Aorta (tissue), 5 donors: ENCODE measurements at regions of chr2 and their contacts with region 1.

Region 1: GRCh38 chr2:33134086-33134771 is 187.5 kb downstream of the LTBP1 start:
- DNase-seq: peak; percentile 77 to 84
- ATAC-seq: peak; percentile 78
- H3K4me3 ChIP-seq: peak overlapping the region; percentile 91 to 97
- H3K27ac ChIP-seq: peak overlapping the region; percentile 98 to 100
- H3K4me1 ChIP-seq: peaks cover 18 to 19% of the 10 kb centered on the region in 2 donors
- H3K27me3 ChIP-seq: no peaks in the 10 kb centered on the region

Region 2: DNA sequence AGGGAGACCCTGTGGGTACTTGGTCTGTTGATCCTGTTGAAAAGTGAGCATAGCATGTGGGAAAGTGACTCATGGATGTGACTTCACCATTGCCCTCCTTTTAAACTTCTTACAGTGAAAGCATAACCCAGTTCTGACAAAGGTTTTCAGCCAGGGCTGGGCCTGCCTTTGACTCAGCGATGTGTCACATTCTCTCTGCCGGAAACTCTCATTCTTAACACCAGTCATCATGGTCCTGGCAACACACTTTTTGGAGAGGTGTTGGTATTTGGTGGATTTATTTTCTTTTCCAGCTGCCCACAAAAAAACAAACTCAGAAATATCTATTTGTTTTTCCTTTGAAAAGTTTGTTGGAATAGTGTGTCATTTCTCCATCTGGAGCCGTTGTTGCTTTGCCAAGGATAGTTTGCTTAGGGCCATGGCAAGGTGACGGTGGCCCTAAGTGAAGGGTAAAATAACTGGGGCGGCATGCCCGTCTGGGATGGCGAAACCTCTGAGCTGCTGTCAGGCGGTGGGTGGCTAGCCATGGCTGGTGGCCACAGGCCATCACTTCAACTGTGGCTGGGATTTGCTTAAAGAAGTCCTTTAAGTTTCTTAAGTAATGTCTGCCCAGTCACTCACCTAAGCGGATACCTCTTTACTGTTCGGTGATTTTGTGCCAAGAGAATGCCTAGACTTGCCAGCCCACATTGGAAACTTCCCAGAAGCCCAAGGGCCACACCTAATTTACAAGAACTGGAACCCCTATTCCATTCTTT is 64.2 kb before region 1 on chr2:
- intact Hi-C with region 1: loop called (anchors 5 kb)
- DNase-seq: peak; percentile 85
- ATAC-seq: peak; percentile 93
- H3K4me3 ChIP-seq: no peak overlapping the region
- H3K27ac ChIP-seq: peak overlapping the region; percentile 72 to 98
- H3K4me1 ChIP-seq: peaks cover 6 to 10% of the 10 kb centered on the region in 2 donors
- H3K27me3 ChIP-seq: no peaks in the 10 kb centered on the region

Region 3: GRCh38 chr2:33108483-33109443 is 25.5 kb before region 1 on chr2:
- intact Hi-C with region 1: loop called in 1 of 2 experiments (anchors 2 kb)
- DNase-seq: no peak
- ATAC-seq: peak; percentile 49
- H3K4me3 ChIP-seq: peak overlapping the region in 1 of 2 donors; percentile 20
- H3K27ac ChIP-seq: peak overlapping the region; percentile 37 to 85
- H3K4me1 ChIP-seq: peaks cover 10 to 20% of the 10 kb centered on the region in 2 donors
- H3K27me3 ChIP-seq: no peaks in the 10 kb centered on the region

Region 4: GRCh38 chr2:33158482-33159003 is 24.3 kb after region 1 on chr2:
- intact Hi-C with region 1: loop called in 1 of 2 experiments (anchors 2 kb)
- DNase-seq: no peak
- ATAC-seq: peak; percentile 58
- H3K4me3 ChIP-seq: no peak overlapping the region
- H3K27ac ChIP-seq: peak overlapping the region; percentile 87 to 99
- H3K4me1 ChIP-seq: peaks cover 12 to 13% of the 10 kb centered on the region in 2 donors
- H3K27me3 ChIP-seq: no peaks in the 10 kb centered on the region

Region 5: GRCh38 chr2:33210626-33211025 is 76.4 kb after region 1 on chr2:
- intact Hi-C with region 1: loop called (anchors 2 to 5 kb)
- DNase-seq: peak; percentile 82 to 84
- ATAC-seq: peak; percentile 78
- H3K4me3 ChIP-seq: no peak overlapping the region
- H3K27ac ChIP-seq: peak overlapping the region in 1 of 2 donors; percentile 37
- H3K4me1 ChIP-seq: peaks cover 12 to 21% of the 10 kb centered on the region in 2 donors
- H3K27me3 ChIP-seq: no peaks in the 10 kb centered on the region

Region 6: GRCh38 chr2:33275689-33276444 is 141.6 kb after region 1 on chr2:
- intact Hi-C with region 1: loop called in 1 of 2 experiments (anchors 5 kb)
- DNase-seq: peak; percentile 86 to 88
- ATAC-seq: peak; percentile 77
- H3K4me3 ChIP-seq: no peak overlapping the region
- H3K27ac ChIP-seq: peak overlapping the region; percentile 58 to 85
- H3K4me1 ChIP-seq: peaks cover 2 to 3% of the 10 kb centered on the region in 2 donors
- H3K27me3 ChIP-seq: no peaks in the 10 kb centered on the region

Region 7: DNA sequence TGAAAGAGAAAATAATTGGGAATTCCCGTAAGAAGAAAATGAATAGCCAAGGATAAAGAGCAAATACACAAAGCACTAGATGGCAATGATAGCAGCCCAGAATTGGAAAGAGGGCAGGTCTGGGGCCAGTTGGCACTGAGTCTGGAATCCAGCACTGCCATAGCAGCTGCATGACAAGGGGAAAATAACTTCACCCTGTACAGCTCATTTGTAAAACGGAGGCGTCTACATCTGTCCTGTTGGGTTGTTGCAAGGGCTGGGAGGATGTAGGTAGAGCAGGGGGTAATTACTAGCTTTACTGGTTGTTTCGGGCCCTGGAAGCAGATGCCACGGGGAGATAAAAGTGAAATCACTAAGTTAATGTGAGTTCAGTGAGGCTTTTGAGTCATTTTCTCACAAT is 232.2 kb after region 1 on chr2:
- intact Hi-C with region 1: loop called in 1 of 2 experiments (anchors 10 kb)
- DNase-seq: peak; percentile 80 to 81
- ATAC-seq: peak; percentile 89
- H3K4me3 ChIP-seq: no peak overlapping the region
- H3K27ac ChIP-seq: peak overlapping the region; percentile 49 to 90
- H3K4me1 ChIP-seq: peaks cover 0 to 1% of the 10 kb centered on the region in 2 donors
- H3K27me3 ChIP-seq: no peaks in the 10 kb centered on the region

Region 8: GRCh38 chr2:33437297-33437696 is 303.1 kb after region 1 on chr2:
- intact Hi-C with region 1: no loop called
- DNase-seq: no peak
- ATAC-seq: no peak
- H3K4me3 ChIP-seq: no peak overlapping the region
- H3K27ac ChIP-seq: no peak overlapping the region
- H3K4me1 ChIP-seq: no peaks in the 10 kb centered on the region
- H3K27me3 ChIP-seq: no peaks in the 10 kb centered on the region

Region 9: DNA sequence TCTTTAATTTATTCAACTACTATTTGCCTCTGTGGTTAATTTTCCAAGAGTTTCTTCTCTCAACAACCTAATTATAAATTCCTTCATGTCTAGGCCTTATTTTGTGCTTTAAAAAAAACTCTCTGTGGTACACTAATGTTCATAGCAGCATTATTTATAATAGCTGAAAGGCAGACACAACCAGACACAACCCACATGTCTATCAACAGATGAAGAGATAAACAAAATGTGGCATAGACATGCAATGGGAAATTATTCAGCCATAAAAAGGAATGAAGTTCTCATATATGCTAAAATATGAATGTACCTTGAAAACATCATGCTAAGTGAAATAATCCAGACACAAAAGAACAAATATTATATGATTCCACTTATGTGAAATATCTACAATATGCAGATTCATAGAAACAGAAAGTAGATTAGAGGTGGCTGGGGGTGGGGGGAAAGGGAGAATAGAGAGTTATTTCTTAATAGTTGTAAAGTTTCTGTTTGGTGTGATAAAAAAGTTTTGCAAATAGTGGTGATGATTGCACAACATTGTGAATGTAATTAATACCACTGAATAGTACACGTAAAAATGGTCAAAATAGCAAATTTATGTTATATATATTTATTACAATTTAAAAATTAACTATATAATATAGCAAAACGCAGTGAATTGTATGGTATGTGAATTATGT is 314.1 kb after region 1 on chr2:
- intact Hi-C with region 1: no loop called
- DNase-seq: no peak
- ATAC-seq: no peak
- H3K4me3 ChIP-seq: no peak overlapping the region
- H3K27ac ChIP-seq: no peak overlapping the region
- H3K4me1 ChIP-seq: no peaks in the 10 kb centered on the region
- H3K27me3 ChIP-seq: no peaks in the 10 kb centered on the region